ENCODE measurements at regions of chr5 and their contacts with region 1.

Region 1: GRCh38 chr5:123285122-123286023 is 137.8 kb downstream of the CEP120 start:
- DNase-seq: peak; percentile 24
- ATAC-seq: peak; percentile 23 to 78

Region 2: DNA sequence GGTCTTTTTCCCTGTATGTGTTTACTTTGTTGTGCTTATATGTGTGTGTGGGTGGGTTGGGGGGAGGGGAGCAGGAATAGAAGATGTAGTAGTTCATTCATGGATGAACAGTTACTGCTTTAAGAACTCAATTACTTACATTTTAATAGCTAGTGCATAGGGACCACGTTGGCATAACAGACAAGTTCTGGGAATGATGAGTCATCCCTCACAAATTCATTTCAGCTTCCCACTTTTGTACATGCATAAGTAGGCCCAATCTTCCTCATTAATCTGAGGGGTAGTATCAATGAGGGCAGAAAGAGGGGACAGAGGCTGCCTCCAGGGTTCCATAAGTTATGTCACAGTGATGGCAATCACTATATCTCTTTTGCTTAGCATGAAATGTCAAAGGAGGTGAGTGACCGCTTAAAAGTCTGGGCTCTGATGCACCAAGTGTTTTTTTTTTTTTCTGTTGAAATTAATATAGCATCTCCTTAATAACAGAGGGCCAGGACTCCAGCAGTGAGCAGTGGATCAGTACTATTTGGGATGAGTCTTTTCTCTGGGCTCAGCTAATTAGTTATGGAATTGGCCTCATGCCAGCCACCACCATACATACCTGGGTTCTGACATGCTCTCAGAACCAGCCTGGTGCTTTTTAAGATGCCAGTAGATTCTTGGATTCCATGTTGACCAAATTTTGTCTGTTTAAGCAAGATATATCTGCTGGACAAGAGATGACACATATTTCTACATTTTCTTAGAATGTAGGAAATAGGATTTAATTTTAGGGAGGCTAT is 159.2 kb before region 1 on chr5:
- intact Hi-C with region 1: no loop called
- DNase-seq: no peak
- ATAC-seq: peak in 1 of 2 donors; percentile 59

Region 3: DNA sequence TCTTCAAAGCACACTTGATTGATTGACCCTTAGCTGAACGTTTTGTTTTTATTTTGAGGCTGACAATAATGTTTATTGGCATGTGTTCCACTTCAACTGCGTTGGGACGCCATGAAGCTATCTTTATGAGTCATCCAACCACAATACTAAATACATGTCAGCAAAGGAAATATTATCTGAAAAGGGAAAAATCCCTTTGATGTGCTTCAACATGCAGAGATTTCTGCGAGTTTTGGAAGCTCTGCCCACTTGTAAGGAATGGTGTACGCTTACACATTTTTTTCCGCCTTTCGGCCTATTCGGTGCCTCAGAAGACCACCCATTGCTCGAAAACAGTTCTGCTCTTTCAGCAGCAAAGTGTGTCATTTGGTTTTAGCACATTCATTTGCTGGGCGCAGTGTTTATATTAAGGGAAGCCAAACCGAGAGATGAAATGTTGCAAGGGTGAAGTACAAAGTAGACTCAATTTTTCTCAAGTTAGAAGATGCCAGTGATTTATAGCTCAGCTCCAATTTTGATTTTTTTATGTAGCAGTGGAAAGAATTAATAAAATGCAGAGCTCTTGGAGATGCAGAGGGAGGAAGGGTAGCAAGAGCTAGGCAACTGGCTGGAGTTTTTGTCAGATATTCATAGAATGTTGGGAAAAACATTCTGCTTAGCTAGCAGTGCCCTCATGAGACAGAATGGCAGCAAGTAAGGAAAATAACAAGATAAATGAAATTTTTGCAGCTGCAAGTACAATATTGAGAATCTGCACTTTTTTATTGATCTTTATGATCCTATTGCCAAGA is 127.4 kb before region 1 on chr5:
- intact Hi-C with region 1: no loop called
- DNase-seq: no peak
- ATAC-seq: peak; percentile 19 to 73

Region 4: GRCh38 chr5:123180178-123180577 is 105.2 kb before region 1 on chr5:
- intact Hi-C with region 1: loop called in 1 of 2 experiments (anchors 10 kb)
- DNase-seq: peak; percentile 62
- ATAC-seq: peak; percentile 90 to 91